ENCODE measurements at regions of chr11 and their contacts with region 1.

Region 1: GRCh38 chr11:13772223-13773046 is 104.0 kb downstream of the FAR1 start:
- DNase-seq: peak; percentile 76
- H3K4me3 Mint-ChIP-seq: no peak overlapping the region
- H3K27ac Mint-ChIP-seq: no peak overlapping the region
- H3K4me1 Mint-ChIP-seq: no peaks in the 10 kb centered on the region
- H3K27me3 Mint-ChIP-seq: peaks cover 54% of the 10 kb centered on the region
- CTCF ChIP-seq: peak; percentile 74

Region 2: DNA sequence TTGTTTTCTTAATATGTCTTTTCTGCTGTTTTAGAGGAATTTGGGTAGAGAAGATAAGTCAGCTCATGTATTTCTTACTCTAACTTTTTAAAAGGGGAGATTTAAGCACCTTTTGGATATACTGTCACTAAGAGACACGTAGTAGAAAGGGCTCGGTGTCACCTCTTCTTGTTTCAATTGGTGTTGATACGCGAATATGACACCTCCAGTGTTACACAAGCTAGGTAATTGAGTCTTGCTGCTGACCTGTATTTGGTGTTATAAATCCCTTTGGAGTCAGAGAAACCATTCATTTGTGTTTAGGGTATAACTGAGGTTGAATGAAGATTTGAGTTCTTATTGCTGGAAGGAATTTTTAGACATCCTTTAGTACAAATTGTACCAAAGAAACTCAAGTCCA is 78.3 kb before region 1 on chr11:
- CTCF ChIA-PET with region 1: interaction called, 10 read pairs
- POLR2A ChIA-PET with region 1: no interaction called
- intact Hi-C with region 1: no loop called
- DNase-seq: no peak
- H3K4me3 Mint-ChIP-seq: no peak overlapping the region
- H3K27ac Mint-ChIP-seq: no peak overlapping the region
- H3K4me1 Mint-ChIP-seq: peaks cover 30% of the 10 kb centered on the region
- H3K27me3 Mint-ChIP-seq: no peaks in the 10 kb centered on the region
- CTCF ChIP-seq: no peak

Region 3: GRCh38 chr11:13782390-13783075 is 10.1 kb after region 1 on chr11:
- CTCF ChIA-PET with region 1: interaction called, 15 read pairs
- POLR2A ChIA-PET with region 1: no interaction called
- intact Hi-C with region 1: no loop called
- DNase-seq: no peak
- H3K4me3 Mint-ChIP-seq: no peak overlapping the region
- H3K27ac Mint-ChIP-seq: no peak overlapping the region
- H3K4me1 Mint-ChIP-seq: no peaks in the 10 kb centered on the region
- H3K27me3 Mint-ChIP-seq: peaks cover 71% of the 10 kb centered on the region
- CTCF ChIP-seq: no peak

Region 4: DNA sequence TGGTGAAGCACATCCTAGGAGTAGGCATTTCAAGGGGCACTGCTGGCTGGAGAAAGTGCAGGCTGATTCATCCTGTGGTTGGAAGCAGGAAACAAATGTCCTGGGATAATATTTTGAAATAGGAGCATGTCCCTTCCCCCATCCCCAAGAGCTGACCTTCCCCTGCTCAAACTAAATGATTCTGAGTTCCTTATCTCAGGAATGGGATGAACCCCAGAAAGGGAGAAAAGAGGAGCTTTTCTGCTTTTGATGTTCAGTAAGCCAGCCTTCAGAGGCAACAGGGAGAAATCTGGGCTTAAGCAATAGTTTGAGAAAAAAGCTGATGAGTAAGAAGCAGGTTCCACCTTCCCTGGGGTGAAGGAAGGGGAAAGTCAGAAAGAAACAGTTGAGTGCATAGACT is 170.5 kb after region 1 on chr11:
- CTCF ChIA-PET with region 1: interaction called, 20 read pairs
- POLR2A ChIA-PET with region 1: no interaction called
- intact Hi-C with region 1: no loop called
- DNase-seq: peak; percentile 83
- H3K4me3 Mint-ChIP-seq: no peak overlapping the region
- H3K27ac Mint-ChIP-seq: no peak overlapping the region
- H3K4me1 Mint-ChIP-seq: peaks cover 22% of the 10 kb centered on the region
- H3K27me3 Mint-ChIP-seq: no peaks in the 10 kb centered on the region
- CTCF ChIP-seq: no peak

Region 5: GRCh38 chr11:13955971-13956421 is 183.6 kb after region 1 on chr11:
- CTCF ChIA-PET with region 1: interaction called, 46 read pairs
- POLR2A ChIA-PET with region 1: no interaction called
- intact Hi-C with region 1: loop called (anchors 1 kb)
- DNase-seq: peak; percentile 72
- H3K4me3 Mint-ChIP-seq: no peak overlapping the region
- H3K27ac Mint-ChIP-seq: no peak overlapping the region
- H3K4me1 Mint-ChIP-seq: no peaks in the 10 kb centered on the region
- H3K27me3 Mint-ChIP-seq: peaks cover 27% of the 10 kb centered on the region
- CTCF ChIP-seq: peak; percentile 82

Region 6: DNA sequence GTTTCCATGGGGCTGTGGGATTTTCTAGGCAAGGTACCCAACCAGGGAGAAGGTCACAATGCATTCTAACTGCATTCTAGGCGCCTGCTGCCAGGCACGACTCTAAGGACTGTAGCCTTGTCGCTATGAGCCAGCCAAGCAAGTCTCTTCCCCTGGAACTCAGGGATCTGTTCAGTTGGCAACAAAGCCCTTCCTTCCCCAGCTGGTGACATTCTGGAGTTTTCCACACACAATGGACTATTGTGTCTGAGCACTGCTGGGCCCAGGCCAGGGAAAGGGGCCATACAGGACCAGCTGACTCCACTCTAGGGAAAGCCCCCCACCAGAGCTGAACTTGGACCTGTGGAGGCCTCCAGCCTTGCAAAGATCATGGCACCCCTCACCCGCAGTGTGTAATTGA is 469.8 kb after region 1 on chr11:
- CTCF ChIA-PET with region 1: interaction called, 16 read pairs
- POLR2A ChIA-PET with region 1: interaction called, 3 read pairs
- intact Hi-C with region 1: no loop called
- DNase-seq: no peak
- H3K4me3 Mint-ChIP-seq: no peak overlapping the region
- H3K27ac Mint-ChIP-seq: no peak overlapping the region
- H3K4me1 Mint-ChIP-seq: no peaks in the 10 kb centered on the region
- H3K27me3 Mint-ChIP-seq: peaks cover 48% of the 10 kb centered on the region
- CTCF ChIP-seq: no peak